ENCODE measurements at regions of chr11 and their contacts with region 1.

Region 1: DNA sequence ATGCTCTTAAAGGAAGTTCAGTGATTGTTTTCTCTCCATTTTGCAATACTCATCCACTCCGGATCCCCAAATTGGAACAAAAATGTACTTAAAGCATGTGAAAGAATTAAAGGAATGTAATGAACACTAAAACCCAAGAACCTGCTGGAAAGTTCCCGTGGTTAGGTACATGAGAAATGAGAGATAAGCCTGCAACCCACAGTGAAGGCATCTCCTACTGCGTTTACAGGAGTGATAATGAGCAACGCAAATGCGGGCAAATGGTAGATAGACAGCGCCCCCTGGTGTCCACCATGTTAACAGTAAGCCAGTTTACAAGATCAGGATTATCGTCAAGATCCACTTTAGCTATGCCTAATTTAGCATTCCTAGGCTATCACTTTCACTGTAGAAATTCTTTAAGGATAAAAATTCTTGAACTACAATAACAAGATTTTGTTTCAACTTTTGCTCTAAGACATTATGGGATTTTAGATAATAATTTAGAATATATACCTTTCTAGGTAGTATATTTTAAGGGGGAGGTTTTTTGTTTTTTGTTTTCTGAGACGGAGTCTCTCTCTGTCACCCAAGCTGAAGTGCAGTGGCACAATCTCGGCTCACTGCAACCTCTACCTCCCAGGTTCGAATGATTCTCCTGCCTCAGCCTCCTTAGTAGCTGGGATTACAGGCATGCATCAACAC is 29.9 kb downstream of the ALG9 start:
- DNase-seq: peak; percentile 82 to 87 (median 86)
- ATAC-seq: peak; percentile 79 to 92 (median 88)
- H3K4me3 ChIP-seq: no peak overlapping the region
- H3K27ac ChIP-seq: no peak overlapping the region
- H3K4me1 ChIP-seq: peaks cover 0 to 16% (median 1%) of the 10 kb centered on the region in 12 donors
- H3K27me3 ChIP-seq: no peaks in the 10 kb centered on the region
- CTCF ChIP-seq: peak; percentile 84 to 95 (median 92)
- POLR2A ChIP-seq: no peak

Region 2: GRCh38 chr11:111283945-111284481 is 557.5 kb before region 1 on chr11:
- intact Hi-C with region 1: loop called in 1 of 10 experiments (anchors 10 kb)
- DNase-seq: peak in 4 of 5 donors; percentile 16 to 39 (median 30)
- ATAC-seq: peak; percentile 27 to 84 (median 53)
- H3K4me3 ChIP-seq: no peak overlapping the region
- H3K27ac ChIP-seq: no peak overlapping the region
- H3K4me1 ChIP-seq: peaks cover 0 to 9% (median 0%) of the 10 kb centered on the region in 12 donors
- H3K27me3 ChIP-seq: peaks cover 0 to 6% (median 0%) of the 10 kb centered on the region in 9 donors
- CTCF ChIP-seq: no peak
- POLR2A ChIP-seq: no peak

Region 3: GRCh38 chr11:111500481-111500880 is 341.0 kb before region 1 on chr11:
- intact Hi-C with region 1: no loop called
- DNase-seq: no peak
- ATAC-seq: no peak
- H3K4me3 ChIP-seq: no peak overlapping the region
- H3K27ac ChIP-seq: no peak overlapping the region
- H3K4me1 ChIP-seq: no peaks in the 10 kb centered on the region
- H3K27me3 ChIP-seq: no peaks in the 10 kb centered on the region
- CTCF ChIP-seq: no peak
- POLR2A ChIP-seq: no peak

Region 4: GRCh38 chr11:111565114-111565720 is 276.3 kb before region 1 on chr11:
- intact Hi-C with region 1: loop called (anchors 1 to 5 kb)
- DNase-seq: peak in 4 of 5 donors; percentile 48 to 64 (median 56)
- ATAC-seq: peak in 2 of 4 donors; percentile 52 to 63
- H3K4me3 ChIP-seq: no peak overlapping the region
- H3K27ac ChIP-seq: no peak overlapping the region
- H3K4me1 ChIP-seq: peaks cover 0 to 15% (median 0%) of the 10 kb centered on the region in 12 donors
- H3K27me3 ChIP-seq: no peaks in the 10 kb centered on the region
- CTCF ChIP-seq: peak; percentile 77 to 96 (median 92)
- POLR2A ChIP-seq: no peak

Region 5: DNA sequence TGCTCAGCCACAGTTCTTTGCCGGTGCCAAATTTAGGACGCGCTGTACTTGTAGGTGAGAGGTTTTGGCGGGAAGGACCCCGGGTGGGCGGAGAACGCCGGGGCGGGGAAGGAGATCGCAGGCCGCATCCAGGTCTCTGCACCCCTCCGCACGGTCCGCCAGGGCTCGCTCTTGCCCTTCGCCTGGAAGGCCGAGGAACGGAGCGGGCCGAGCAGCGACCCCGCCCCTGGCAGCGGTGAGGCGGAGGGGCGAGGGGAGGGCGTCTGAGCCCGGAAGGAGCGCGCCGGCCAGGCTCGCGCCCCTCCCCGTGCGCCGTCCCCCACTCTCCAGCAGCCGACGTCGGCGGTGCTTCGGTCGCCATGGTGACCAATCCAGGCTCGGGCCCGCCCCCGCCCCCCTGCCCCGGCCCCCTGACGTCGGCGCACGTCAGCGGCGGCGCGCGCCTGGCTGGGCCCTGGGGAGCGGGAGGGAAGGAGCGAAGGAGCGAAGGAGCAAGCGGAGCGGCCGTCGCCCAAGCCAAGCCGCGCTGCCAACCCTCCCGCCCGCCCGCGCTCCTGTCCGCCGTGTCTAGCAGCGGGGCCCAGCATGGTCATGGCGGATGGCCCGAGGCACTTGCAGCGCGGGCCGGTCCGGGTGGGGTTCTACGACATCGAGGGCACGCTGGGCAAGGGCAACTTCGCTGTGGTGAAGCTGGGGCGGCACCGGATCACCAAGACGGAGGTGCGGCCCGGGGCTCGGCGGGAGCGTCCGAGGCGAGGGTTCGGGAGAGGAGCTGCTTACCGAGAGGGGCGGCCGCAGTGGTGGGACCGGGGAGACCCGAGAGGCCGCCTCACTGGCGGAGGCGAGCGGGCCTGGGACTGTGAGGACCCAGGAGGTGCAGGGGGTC is 239.3 kb before region 1 on chr11 and contains the start of gene SIK2:
- intact Hi-C with region 1: loop called in 7 of 10 experiments (anchors 1 to 5 kb)
- DNase-seq: peak; percentile 96 to 97 (median 97)
- ATAC-seq: peak; percentile 95 to 98 (median 96)
- H3K4me3 ChIP-seq: peak within 1 kb of the TSS; percentile 69 to 96 (median 87)
- H3K27ac ChIP-seq: peak within 1 kb of the TSS; percentile 91 to 99 (median 96)
- H3K4me1 ChIP-seq: peaks cover 3 to 45% (median 25%) of the 10 kb centered on the region in 12 donors
- H3K27me3 ChIP-seq: no peaks in the 10 kb centered on the region
- CTCF ChIP-seq: peak; percentile 77 to 98 (median 96)
- POLR2A ChIP-seq: peak in 1 of 2 donors; percentile 51
- total RNA-seq, gene SIK2: 15.9 to 45.8 (median 27.7) TPM

Region 6: DNA sequence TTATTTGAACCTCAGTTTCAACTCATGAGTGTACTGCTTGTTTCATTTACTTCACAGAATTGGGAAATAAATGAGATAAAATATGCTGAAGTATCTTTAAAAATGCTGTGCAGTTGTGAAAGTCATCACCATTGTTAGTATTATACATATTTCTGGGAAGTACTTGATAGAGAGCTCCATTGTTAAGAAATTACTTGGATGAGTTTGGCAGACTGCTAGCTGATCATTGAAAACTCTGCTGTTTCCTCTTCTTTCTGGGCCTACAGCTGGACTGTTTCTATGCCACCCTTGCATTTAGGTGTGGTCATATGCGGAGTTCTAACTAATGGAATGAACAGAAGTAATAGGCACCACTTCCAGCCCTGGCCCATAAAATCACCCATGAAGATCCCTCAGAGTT is 229.3 kb before region 1 on chr11:
- intact Hi-C with region 1: no loop called
- DNase-seq: no peak
- ATAC-seq: peak in 2 of 4 donors; percentile 39 to 57
- H3K4me3 ChIP-seq: no peak overlapping the region
- H3K27ac ChIP-seq: peak overlapping the region in 1 of 12 donors; percentile 43
- H3K4me1 ChIP-seq: peaks cover 0 to 21% (median 13%) of the 10 kb centered on the region in 12 donors
- H3K27me3 ChIP-seq: no peaks in the 10 kb centered on the region
- CTCF ChIP-seq: no peak
- POLR2A ChIP-seq: no peak

Region 7: DNA sequence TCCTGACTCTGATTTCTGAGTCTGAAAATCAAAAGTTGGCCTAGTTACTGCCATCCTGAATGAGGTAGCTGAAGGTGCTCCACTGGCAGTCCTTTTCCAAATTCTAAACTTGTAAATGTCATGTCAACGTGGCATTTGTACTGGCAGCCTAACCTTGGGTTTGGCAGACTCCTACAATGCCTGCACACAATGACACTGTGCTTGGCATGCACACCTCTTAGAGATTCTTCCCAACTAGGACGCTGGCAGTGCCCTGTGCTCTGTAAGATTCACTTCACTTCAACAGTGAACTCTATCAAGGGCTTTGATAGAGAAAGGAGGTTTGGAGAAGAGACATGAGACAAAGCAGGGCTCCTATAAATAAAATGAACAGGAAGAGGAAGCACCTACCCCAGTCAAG is 53.5 kb before region 1 on chr11:
- intact Hi-C with region 1: loop called in 1 of 10 experiments (anchors 10 kb)
- DNase-seq: peak; percentile 44 to 91 (median 76)
- ATAC-seq: peak; percentile 95 to 97 (median 96)
- H3K4me3 ChIP-seq: no peak overlapping the region
- H3K27ac ChIP-seq: peak overlapping the region; percentile 69 to 97 (median 82)
- H3K4me1 ChIP-seq: peaks cover 0 to 48% (median 8%) of the 10 kb centered on the region in 12 donors
- H3K27me3 ChIP-seq: no peaks in the 10 kb centered on the region
- CTCF ChIP-seq: no peak
- POLR2A ChIP-seq: no peak

Region 8: GRCh38 chr11:111801135-111801534 is 40.4 kb before region 1 on chr11:
- intact Hi-C with region 1: no loop called
- DNase-seq: no peak
- ATAC-seq: peak in 3 of 4 donors; percentile 42 to 60 (median 58)
- H3K4me3 ChIP-seq: no peak overlapping the region
- H3K27ac ChIP-seq: no peak overlapping the region
- H3K4me1 ChIP-seq: peaks cover 0 to 17% (median 0%) of the 10 kb centered on the region in 12 donors
- H3K27me3 ChIP-seq: no peaks in the 10 kb centered on the region
- CTCF ChIP-seq: no peak
- POLR2A ChIP-seq: no peak

Region 9: GRCh38 chr11:112113539-112114457 is 272.3 kb after region 1 on chr11:
- intact Hi-C with region 1: no loop called
- DNase-seq: no peak
- ATAC-seq: peak; percentile 57 to 82 (median 62)
- H3K4me3 ChIP-seq: peak overlapping the region in 3 of 12 donors; percentile 4 to 28 (median 18)
- H3K27ac ChIP-seq: no peak overlapping the region
- H3K4me1 ChIP-seq: peaks cover 0 to 5% (median 0%) of the 10 kb centered on the region in 12 donors
- H3K27me3 ChIP-seq: no peaks in the 10 kb centered on the region
- CTCF ChIP-seq: peak; percentile 50 to 78 (median 64)
- POLR2A ChIP-seq: no peak